ENCODE measurements at regions of chr5 and their contacts with region 1.

Region 1: GRCh38 chr5:35777358-35778087 is 79.2 kb upstream of the IL7R start:
- DNase-seq: peak in 3 of 4 donors; percentile 24 to 68 (median 67)
- ATAC-seq: peak; percentile 78
- H3K4me3 ChIP-seq: no peak overlapping the region
- H3K27ac ChIP-seq: no peak overlapping the region
- H3K4me1 ChIP-seq: peaks cover 5 to 11% of the 10 kb centered on the region in 2 donors
- H3K27me3 ChIP-seq: no peaks in the 10 kb centered on the region
- CTCF ChIP-seq: peak; percentile 40 to 44

Region 2: DNA sequence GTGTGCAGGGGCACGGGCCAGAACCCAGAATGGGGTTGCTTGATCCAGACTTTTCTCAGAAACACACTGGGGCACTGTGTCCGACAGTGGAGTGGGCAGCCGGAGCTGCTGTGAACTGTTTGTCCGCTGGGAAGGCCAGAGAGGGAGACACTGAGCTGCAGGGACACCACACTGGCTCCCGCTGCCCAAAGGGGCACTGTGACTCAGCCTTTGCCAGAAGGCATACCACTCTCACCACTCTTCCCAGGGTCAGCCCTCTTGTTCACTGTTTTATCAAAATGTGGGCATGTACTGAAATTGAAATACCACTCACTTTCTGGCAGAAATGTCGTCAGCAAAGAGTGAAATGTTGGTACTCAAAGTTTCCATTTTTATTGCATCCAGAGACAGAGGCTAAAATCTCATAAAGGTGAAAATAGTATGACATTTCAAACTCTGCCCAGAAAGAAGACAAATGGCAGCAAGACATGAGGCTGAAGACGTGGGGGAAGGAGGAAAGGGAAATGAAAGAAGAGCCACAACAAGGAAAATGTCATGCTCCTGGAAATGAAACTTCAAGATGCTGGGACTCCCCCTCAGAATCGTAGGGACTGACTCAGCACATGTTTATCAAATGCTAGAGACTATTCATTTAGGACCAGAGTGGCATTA is 74.7 kb after region 1 on chr5:
- intact Hi-C with region 1: loop called in 1 of 2 experiments (anchors 5 kb)
- DNase-seq: peak in 1 of 4 donors; percentile 53
- ATAC-seq: peak; percentile 15
- H3K4me3 ChIP-seq: no peak overlapping the region
- H3K27ac ChIP-seq: peak overlapping the region in 1 of 2 donors; percentile 77
- H3K4me1 ChIP-seq: peaks cover 0 to 36% of the 10 kb centered on the region in 2 donors
- H3K27me3 ChIP-seq: no peaks in the 10 kb centered on the region
- CTCF ChIP-seq: no peak

Region 3: GRCh38 chr5:35924950-35925722 is 147.6 kb after region 1 on chr5:
- intact Hi-C with region 1: loop called in 1 of 2 experiments (anchors 5 kb)
- DNase-seq: peak; percentile 42 to 89 (median 66)
- ATAC-seq: peak; percentile 87
- H3K4me3 ChIP-seq: peak overlapping the region in 1 of 2 donors; percentile 12
- H3K27ac ChIP-seq: no peak overlapping the region
- H3K4me1 ChIP-seq: peaks cover 7 to 19% of the 10 kb centered on the region in 2 donors
- H3K27me3 ChIP-seq: peaks cover 0 to 33% of the 10 kb centered on the region in 2 donors
- CTCF ChIP-seq: peak; percentile 30 to 46